Caco-2 (cell line): ENCODE measurements at regions of chr17 and their contacts with region 1.

Region 1: DNA sequence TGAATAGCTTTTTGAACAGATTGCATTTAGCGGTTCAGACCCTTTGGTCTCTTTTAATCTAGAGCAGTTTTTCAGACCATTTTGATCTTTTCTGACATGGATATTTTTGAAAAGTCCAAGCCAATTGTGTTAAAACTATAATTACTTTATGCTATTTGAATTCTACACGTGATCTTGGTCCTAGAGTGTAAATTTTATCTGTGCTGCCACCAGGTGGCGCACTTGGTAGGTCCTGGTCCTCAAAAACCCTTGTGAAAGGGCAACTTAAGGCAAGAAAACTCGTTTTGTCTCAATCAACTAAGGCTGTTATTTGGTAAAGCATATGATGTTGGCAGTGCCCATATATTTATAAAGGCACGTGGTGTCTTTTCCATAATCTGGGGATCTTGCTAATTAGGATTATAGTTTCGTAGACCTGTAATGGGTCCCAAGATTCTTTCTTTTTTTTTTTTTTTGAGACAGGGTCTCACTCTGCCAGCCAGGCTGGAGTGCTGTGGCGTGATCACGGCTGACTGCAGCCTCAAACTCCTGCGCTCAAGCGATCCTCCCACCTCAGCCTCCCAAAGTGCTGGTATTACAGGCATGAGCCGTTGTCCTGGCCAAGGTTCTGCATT is 43.9 kb upstream of the TEX2 start:
- DNase-seq: peak; percentile 72 to 77
- H3K4me3 ChIP-seq: no peak overlapping the region
- H3K4me3 Mint-ChIP-seq: no peak overlapping the region
- H3K27ac Mint-ChIP-seq: no peak overlapping the region
- H3K4me1 ChIP-seq: peaks cover 38% of the 10 kb centered on the region
- H3K4me1 Mint-ChIP-seq: peaks cover 22% of the 10 kb centered on the region
- H3K27me3 ChIP-seq: no peaks in the 10 kb centered on the region
- H3K27me3 Mint-ChIP-seq: no peaks in the 10 kb centered on the region
- CTCF ChIP-seq: peak; percentile 80 to 89

Region 2: GRCh38 chr17:64343853-64344637 is 37.1 kb after region 1 on chr17:
- CTCF ChIA-PET with region 1: no interaction called
- POLR2A ChIA-PET with region 1: no interaction called
- intact Hi-C with region 1: loop called (anchors 1 kb)
- DNase-seq: peak; percentile 26 to 50
- H3K4me3 ChIP-seq: no peak overlapping the region
- H3K4me3 Mint-ChIP-seq: no peak overlapping the region
- H3K27ac Mint-ChIP-seq: peak overlapping the region; percentile 81
- H3K4me1 ChIP-seq: peaks cover 6% of the 10 kb centered on the region; the same call in 1 of the 2 replicates
- H3K4me1 Mint-ChIP-seq: peaks cover 9% of the 10 kb centered on the region
- H3K27me3 ChIP-seq: no peaks in the 10 kb centered on the region
- H3K27me3 Mint-ChIP-seq: no peaks in the 10 kb centered on the region
- CTCF ChIP-seq: no peak

Region 3: DNA sequence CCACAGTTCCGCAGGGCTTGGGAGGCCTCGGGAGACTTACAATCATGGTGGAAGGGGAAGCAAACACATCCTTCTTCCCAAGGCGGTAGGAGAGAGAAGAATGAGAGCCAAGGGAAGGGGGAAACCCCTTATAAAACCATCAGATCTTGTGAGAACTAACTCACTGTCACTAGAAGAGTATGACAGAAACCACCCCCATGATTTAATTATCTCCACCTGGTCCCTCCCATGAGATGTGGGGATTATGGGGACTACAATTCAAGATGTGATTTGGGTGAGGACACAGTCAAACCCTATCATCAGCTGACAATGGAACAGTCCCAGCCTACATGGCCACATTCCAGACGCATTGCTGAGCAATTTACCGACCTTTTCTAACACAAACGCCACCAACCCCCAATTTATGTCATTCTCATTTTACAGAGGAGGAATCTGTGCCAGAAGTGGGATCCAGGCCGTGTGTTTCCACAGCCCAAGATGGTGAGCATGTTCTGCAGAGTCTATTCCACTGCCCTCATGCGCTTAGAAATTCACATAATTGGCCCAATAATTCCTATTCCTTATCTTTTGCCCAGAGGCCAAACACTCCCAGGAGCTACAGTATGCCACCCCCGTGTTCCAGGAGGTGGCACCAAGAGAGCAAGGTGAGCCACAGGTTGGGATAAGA is 159.2 kb after region 1 on chr17:
- CTCF ChIA-PET with region 1: no interaction called
- POLR2A ChIA-PET with region 1: no interaction called
- intact Hi-C with region 1: no loop called
- DNase-seq: no peak
- H3K4me3 ChIP-seq: no peak overlapping the region
- H3K4me3 Mint-ChIP-seq: no peak overlapping the region
- H3K27ac Mint-ChIP-seq: no peak overlapping the region
- H3K4me1 ChIP-seq: 0 out of 2 replicates have a peak, but pooled peaks cover 9% of the 10 kb centered on the region
- H3K4me1 Mint-ChIP-seq: no peaks in the 10 kb centered on the region
- H3K27me3 ChIP-seq: no peaks in the 10 kb centered on the region
- H3K27me3 Mint-ChIP-seq: no peaks in the 10 kb centered on the region
- CTCF ChIP-seq: no peak

Region 4: DNA sequence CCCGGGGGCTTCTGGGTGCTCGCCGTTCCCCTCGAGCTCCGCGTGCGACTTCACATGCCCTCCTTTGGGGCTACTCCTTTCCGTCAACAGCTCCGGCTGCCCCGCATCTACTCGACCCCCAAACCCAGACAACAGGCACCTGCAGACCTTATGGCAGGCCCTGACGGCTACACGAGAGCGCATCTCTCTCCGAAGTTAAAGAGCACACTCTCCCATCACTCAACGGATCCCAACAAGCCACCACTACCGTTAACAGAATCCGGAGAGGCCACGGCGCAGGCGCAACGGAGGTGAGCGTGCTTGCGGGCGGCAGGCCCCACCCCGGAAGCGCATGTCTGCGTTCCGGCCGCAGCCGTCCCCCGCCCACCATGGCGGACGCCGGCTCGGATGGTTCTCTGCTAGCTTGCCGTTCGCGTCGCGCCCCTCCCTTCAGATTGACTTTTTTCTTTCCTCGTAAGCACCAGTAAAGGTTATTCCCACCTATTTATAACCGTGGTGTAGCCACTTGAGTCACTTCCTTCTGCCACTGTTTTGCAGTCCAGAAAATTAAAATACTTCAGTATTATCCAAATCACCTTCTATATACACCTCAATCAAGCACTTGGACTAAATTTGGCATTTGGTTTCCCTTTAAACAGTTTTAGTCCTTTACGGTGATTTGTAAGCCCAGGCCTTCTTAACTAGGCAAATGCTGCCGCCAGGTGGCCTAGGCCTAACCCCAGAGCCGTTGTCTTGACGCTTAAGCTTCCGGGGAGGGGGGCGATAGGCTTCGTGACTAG is 190.0 kb after region 1 on chr17 and contains the start of gene POLG2:
- CTCF ChIA-PET with region 1: no interaction called
- POLR2A ChIA-PET with region 1: no interaction called
- intact Hi-C with region 1: loop called (anchors 5 kb)
- DNase-seq: peak; percentile 94 to 96
- H3K4me3 ChIP-seq: peak within 1 kb of the TSS; percentile 55
- H3K4me3 Mint-ChIP-seq: peak within 1 kb of the TSS; percentile 96
- H3K27ac Mint-ChIP-seq: peak within 1 kb of the TSS; percentile 92
- H3K4me1 ChIP-seq: peaks cover 26% of the 10 kb centered on the region
- H3K4me1 Mint-ChIP-seq: peaks cover 51% of the 10 kb centered on the region
- H3K27me3 ChIP-seq: no peaks in the 10 kb centered on the region
- H3K27me3 Mint-ChIP-seq: no peaks in the 10 kb centered on the region
- CTCF ChIP-seq: peak; percentile 70 to 71
- total RNA-seq, gene POLG2: 28.9 and 32.9 TPM in 2 replicates

Region 5: GRCh38 chr17:64506576-64507477 is 199.9 kb after region 1 on chr17 and contains the start of gene CEP95:
- CTCF ChIA-PET with region 1: no interaction called
- POLR2A ChIA-PET with region 1: interaction called, 14 read pairs
- intact Hi-C with region 1: no loop called
- DNase-seq: peak in 1 of 2 experiments; percentile 97
- H3K4me3 ChIP-seq: peak within 1 kb of the TSS; percentile 70
- H3K4me3 Mint-ChIP-seq: peak within 1 kb of the TSS; percentile 97
- H3K27ac Mint-ChIP-seq: peak within 1 kb of the TSS; percentile 100
- H3K4me1 ChIP-seq: peaks cover 15% of the 10 kb centered on the region
- H3K4me1 Mint-ChIP-seq: peaks cover 35% of the 10 kb centered on the region
- H3K27me3 ChIP-seq: no peaks in the 10 kb centered on the region
- H3K27me3 Mint-ChIP-seq: no peaks in the 10 kb centered on the region
- CTCF ChIP-seq: no peak
- total RNA-seq, gene CEP95: 63.6 and 69.4 TPM in 2 replicates